ENCODE measurements at regions of chr1 and their contacts with region 1.

Region 1: DNA sequence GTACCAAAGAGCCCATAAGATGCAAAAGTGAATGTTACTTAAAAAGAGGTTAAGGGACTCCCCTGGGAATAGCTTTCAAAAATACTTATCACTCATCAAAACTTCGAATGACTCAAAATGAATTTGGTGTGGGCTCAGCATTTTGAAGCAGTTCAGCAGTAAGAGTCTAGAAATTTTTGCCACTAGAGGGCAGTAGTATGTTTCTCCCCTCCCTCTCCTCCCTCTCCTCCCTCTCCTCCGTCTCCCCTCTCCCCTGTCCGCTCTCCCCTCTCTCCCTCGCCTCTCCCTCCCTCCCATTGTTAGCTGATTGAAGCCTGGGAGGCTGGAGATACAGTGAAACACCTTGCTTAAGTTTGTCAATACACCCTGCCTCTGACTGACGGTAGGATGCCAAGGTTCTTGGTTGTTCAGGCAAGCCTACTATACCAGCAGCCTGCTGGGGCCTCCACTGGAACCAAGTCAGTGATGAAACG is 70.8 kb upstream of the TENT5C start:
- DNase-seq: peak; percentile 35
- ATAC-seq: peak; percentile 94
- H3K4me3 ChIP-seq: no peak overlapping the region
- H3K27ac ChIP-seq: no peak overlapping the region
- H3K4me1 ChIP-seq: peaks cover 2 to 8% of the 10 kb centered on the region in 2 experiments; a peak in 1 of 4 replicates
- H3K27me3 ChIP-seq: no peaks in the 10 kb centered on the region
- CTCF ChIP-seq: peak; percentile 27 to 78 (median 67); a peak in 5 of 6 replicates
- POLR2A ChIP-seq: no peak
- RAD21 ChIP-seq: peak; percentile 52

Region 2: DNA sequence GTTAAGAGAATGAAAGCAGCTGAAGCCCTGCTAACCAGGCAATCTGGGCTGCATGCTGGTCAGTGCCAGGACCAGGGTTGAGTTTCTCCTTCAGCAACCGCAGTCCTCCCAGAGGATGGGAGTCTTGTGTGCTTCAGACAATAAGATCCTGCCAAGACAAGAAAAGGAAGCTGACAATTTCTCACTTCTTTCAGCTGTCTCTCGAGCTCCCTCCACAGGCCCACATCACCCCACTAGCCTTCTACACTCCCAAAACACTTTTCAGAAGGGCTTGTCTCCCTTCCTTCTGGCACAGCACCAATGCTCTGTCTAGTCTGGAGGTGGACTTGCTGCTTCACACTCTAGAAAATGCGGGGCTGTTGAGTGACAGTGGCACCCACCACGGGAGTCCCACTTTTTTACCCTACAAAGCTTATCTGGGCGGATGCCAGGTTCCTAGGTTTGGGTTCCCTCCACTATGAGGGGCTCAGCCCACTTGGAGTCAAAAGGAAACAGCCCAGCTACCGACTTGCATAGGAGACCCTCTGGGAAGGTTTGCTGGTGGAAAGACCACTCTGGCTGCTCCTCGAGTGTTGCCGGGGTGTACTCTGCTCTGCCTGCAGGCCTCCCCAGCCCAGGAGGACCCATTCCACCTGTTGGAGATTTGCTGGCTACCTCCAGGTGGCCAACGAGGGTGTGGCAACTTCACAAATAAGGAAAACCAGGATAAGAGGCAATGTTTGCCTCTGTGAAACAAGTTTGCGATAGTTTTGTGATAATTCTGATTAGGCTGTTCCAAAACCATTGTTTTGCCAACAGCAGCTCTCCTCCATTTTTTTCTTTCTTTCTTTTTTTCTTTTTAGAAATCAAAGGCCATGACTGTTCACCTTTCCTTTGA is 139.7 kb after region 1 on chr1:
- CTCF ChIA-PET with region 1: interaction called, 10 read pairs
- POLR2A ChIA-PET with region 1: no interaction called
- RAD21 ChIA-PET with region 1: no interaction called
- intact Hi-C with region 1: no loop called
- DNase-seq: no peak
- ATAC-seq: 0 out of 2 replicates have a peak, but pooled peaks have one; percentile 30
- H3K4me3 ChIP-seq: no peak overlapping the region
- H3K27ac ChIP-seq: no peak overlapping the region
- H3K4me1 ChIP-seq: 0 out of 4 replicates have a peak, but pooled peaks cover 0 to 4% of the 10 kb centered on the region in 2 experiments
- H3K27me3 ChIP-seq: no peaks in the 10 kb centered on the region
- CTCF ChIP-seq: no peak
- POLR2A ChIP-seq: no peak
- RAD21 ChIP-seq: peak; percentile 11; the same call in 1 of the 2 replicates

Measured in HCT116 (cell line).